MCF 10A (cell line): ENCODE measurements at regions of chr1 and their contacts with region 1.

Region 1: DNA sequence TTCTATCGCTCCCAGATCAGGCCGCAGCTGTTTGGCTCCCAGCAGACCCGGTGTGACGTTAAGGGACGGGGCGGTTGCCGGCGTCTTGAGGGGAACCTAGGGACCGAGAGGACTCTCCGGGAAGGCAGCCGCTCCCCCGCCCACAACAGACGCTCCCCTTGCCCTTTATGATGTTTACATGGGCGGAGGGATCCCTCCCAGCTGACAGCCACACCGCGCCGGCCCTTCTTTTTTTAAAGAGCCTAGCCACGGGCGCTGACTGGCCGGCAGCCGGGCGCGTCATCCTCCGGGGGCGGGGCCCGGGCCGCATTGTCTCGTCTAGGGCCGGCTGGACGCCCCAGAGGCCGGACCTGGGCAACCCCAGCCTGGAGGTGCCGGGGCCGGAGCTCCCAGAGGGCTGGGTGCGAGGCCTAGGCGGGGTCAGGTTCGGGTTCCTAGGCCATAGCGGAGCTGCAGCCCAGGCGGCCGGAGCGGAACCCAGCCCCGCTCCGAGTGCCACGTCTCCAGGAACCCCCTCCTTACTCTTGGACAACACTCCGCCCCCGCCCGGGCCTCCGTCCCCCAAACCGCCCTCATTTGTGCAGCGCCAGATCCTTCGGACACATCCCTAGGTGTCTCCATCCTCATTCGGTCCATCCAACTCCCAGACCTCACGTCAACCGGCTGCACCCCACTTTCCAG is at the start of gene PCAT6:
- DNase-seq: peak; percentile 99
- H3K4me3 Mint-ChIP-seq: peak within 1 kb of the TSS; percentile 81
- H3K27ac Mint-ChIP-seq: peak within 1 kb of the TSS; percentile 65
- H3K4me1 Mint-ChIP-seq: peaks cover 33% of the 10 kb centered on the region
- H3K27me3 Mint-ChIP-seq: no peaks in the 10 kb centered on the region
- CTCF ChIP-seq: no peak
- total RNA-seq, gene PCAT6: 3.2 and 5.4 TPM in 2 replicates

Region 2: DNA sequence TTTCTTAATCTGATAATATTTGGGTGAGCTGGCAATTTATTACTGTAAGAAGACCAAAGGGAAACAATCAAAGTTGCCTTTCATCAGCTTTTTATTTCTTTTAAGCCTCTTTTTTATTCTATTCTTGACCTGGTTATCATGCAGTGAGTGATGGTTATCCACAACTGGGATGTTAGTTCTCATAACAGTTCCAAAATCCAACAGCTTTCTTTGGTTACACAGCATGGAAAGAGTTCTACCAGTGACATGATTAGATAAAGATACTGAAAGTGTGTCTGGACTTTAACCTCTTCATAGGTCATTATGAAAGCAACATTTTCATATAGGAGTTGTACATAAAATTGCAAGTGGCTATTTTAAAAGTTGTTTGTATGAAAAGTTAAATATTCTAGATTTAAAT is 263.5 kb before region 1 on chr1:
- CTCF ChIA-PET with region 1: no interaction called
- POLR2A ChIA-PET with region 1: no interaction called
- intact Hi-C with region 1: no loop called
- DNase-seq: no peak
- H3K4me3 Mint-ChIP-seq: no peak overlapping the region
- H3K27ac Mint-ChIP-seq: no peak overlapping the region
- H3K4me1 Mint-ChIP-seq: peaks cover 5% of the 10 kb centered on the region
- H3K27me3 Mint-ChIP-seq: no peaks in the 10 kb centered on the region
- CTCF ChIP-seq: no peak

Region 3: DNA sequence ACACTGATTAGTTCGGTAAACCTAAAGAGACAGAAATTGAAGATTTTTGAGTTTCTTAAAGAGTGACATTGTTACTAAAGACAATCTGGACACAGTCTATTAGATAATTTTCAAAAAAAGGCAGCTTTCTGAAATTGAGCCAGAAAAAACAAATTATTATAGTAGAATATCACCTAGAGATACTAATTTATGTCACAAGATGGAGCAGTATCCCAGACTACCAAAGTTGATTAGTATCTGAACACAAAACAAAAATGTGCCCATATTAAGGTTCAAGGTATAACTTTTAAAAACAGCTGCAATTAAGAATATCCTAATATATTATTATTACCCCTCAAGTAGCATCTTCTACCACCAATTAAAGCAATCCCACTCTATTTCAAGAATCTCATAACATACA is 60.0 kb before region 1 on chr1:
- CTCF ChIA-PET with region 1: no interaction called
- POLR2A ChIA-PET with region 1: interaction called, 5 read pairs
- intact Hi-C with region 1: loop called (anchors 5 kb)
- DNase-seq: peak; percentile 12
- H3K4me3 Mint-ChIP-seq: no peak overlapping the region
- H3K27ac Mint-ChIP-seq: no peak overlapping the region
- H3K4me1 Mint-ChIP-seq: no peaks in the 10 kb centered on the region
- H3K27me3 Mint-ChIP-seq: no peaks in the 10 kb centered on the region
- CTCF ChIP-seq: peak; percentile 24

Region 4: GRCh38 chr1:202796302-202797069 is 14.3 kb before region 1 on chr1:
- CTCF ChIA-PET with region 1: interaction called, 4 read pairs
- POLR2A ChIA-PET with region 1: interaction called, 25 read pairs
- intact Hi-C with region 1: no loop called
- DNase-seq: no peak
- H3K4me3 Mint-ChIP-seq: no peak overlapping the region
- H3K27ac Mint-ChIP-seq: no peak overlapping the region
- H3K4me1 Mint-ChIP-seq: peaks cover 11% of the 10 kb centered on the region
- H3K27me3 Mint-ChIP-seq: no peaks in the 10 kb centered on the region
- CTCF ChIP-seq: no peak

Region 5: GRCh38 chr1:202835548-202836090 is 24.9 kb after region 1 on chr1:
- CTCF ChIA-PET with region 1: interaction called, 4 read pairs
- POLR2A ChIA-PET with region 1: interaction called, 15 read pairs
- intact Hi-C with region 1: no loop called
- DNase-seq: no peak
- H3K4me3 Mint-ChIP-seq: no peak overlapping the region
- H3K27ac Mint-ChIP-seq: no peak overlapping the region
- H3K4me1 Mint-ChIP-seq: peaks cover 20% of the 10 kb centered on the region
- H3K27me3 Mint-ChIP-seq: no peaks in the 10 kb centered on the region
- CTCF ChIP-seq: no peak

Region 6: GRCh38 chr1:202861420-202862200 is 50.9 kb after region 1 on chr1:
- CTCF ChIA-PET with region 1: interaction called, 7 read pairs
- POLR2A ChIA-PET with region 1: interaction called, 23 read pairs
- intact Hi-C with region 1: no loop called
- DNase-seq: peak; percentile 97
- H3K4me3 Mint-ChIP-seq: peak overlapping the region; percentile 87
- H3K27ac Mint-ChIP-seq: no peak overlapping the region
- H3K4me1 Mint-ChIP-seq: peaks cover 6% of the 10 kb centered on the region
- H3K27me3 Mint-ChIP-seq: peaks cover 39% of the 10 kb centered on the region
- CTCF ChIP-seq: no peak

Region 7: GRCh38 chr1:202952818-202953217 is 142.1 kb after region 1 on chr1:
- CTCF ChIA-PET with region 1: interaction called, 4 read pairs
- POLR2A ChIA-PET with region 1: interaction called, 14 read pairs
- intact Hi-C with region 1: no loop called
- DNase-seq: peak; percentile 93
- H3K4me3 Mint-ChIP-seq: peak overlapping the region; percentile 48
- H3K27ac Mint-ChIP-seq: peak overlapping the region; percentile 65
- H3K4me1 Mint-ChIP-seq: peaks cover 55% of the 10 kb centered on the region
- H3K27me3 Mint-ChIP-seq: no peaks in the 10 kb centered on the region
- CTCF ChIP-seq: no peak